Psoas muscle (tissue), 8 donors: ENCODE measurements at regions of chr6 and their contacts with region 1.

Region 1: GRCh38 chr6:3281631-3282475 is 23.1 kb downstream of the PSMG4 start:
- DNase-seq: peak in 1 of 2 donors; percentile 41
- ATAC-seq: peak; percentile 78 to 94 (median 88)
- H3K4me3 ChIP-seq: no peak overlapping the region
- H3K27ac ChIP-seq: peak overlapping the region; percentile 74
- H3K4me1 ChIP-seq: peaks cover 42% of the 10 kb centered on the region
- H3K27me3 ChIP-seq: no peaks in the 10 kb centered on the region
- CTCF ChIP-seq: no peak

Region 2: DNA sequence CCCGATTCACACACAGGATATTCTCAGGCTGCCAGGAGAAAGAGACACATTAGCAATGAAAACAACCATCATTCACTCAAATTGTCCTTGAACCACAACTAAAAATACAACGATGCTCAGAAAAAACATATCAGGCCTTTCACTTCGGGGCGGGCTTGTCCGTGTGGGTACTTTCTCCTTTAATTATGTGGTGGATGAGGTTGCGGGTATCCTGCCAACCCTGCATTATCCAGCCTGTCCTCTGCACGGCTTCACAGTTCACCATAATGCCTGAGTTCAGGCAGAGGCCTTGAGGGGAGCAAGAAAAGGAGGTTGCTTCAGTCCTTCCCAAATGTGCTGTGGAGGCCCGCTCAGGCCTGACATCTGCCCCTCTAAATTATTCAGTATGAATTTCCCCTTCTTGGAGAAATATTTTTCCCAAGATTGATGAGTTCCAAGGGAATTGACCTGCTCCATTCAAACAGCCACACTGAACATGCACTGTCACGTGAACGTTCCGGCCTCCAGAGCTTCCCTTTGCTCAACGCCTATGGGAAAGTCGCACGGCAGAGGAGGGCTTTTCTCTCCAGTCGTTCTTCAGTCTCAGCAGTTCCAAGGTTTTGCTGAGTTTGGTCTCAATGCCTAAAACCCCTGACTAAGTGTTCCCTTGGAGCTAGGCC is 601.5 kb before region 1 on chr6:
- intact Hi-C with region 1: no loop called
- DNase-seq: no peak
- ATAC-seq: peak in 1 of 4 donors; percentile 28
- H3K4me3 ChIP-seq: no peak overlapping the region
- H3K27ac ChIP-seq: no peak overlapping the region
- H3K4me1 ChIP-seq: peaks cover 4% of the 10 kb centered on the region
- H3K27me3 ChIP-seq: no peaks in the 10 kb centered on the region
- CTCF ChIP-seq: no peak

Region 3: DNA sequence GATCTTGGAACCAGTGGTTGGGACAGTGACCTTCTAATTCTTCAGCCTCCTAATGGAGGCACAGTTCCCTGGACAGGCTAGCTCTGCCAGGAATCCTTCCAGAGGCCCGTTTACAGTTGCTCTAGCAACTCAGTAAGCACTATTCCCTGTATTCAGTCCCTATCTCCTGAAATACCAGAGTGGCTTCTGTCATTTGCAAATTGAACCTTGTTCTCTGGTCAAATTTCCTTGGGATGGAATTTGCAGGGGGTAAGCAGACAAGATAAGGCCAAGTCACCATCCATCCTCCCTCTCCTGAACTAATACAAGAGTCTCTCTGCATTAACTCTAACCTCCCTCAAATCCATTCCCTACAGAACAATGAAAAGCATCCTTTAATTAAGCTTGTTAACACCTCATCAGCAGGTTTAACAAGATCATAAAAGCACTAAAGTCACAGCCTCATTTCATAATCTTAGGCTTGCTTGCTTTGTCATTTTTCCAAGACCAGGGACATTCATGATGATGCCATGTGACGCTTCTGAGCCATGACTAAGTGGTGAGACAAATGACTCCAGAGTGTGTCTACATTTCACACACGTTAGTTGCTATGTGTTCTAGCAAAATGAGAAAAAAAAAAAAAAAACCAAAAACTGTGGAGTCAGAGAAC is 137.9 kb after region 1 on chr6:
- intact Hi-C with region 1: loop called in 1 of 2 experiments (anchors 10 kb)
- DNase-seq: no peak
- ATAC-seq: peak; percentile 74 to 92 (median 88)
- H3K4me3 ChIP-seq: no peak overlapping the region
- H3K27ac ChIP-seq: peak overlapping the region; percentile 68
- H3K4me1 ChIP-seq: peaks cover 46% of the 10 kb centered on the region
- H3K27me3 ChIP-seq: no peaks in the 10 kb centered on the region
- CTCF ChIP-seq: no peak

Region 4: GRCh38 chr6:3518356-3519225 is 236.7 kb after region 1 on chr6:
- intact Hi-C with region 1: loop called in 1 of 2 experiments (anchors 10 kb)
- DNase-seq: peak; percentile 56 to 64
- ATAC-seq: peak; percentile 76 to 88 (median 78)
- H3K4me3 ChIP-seq: no peak overlapping the region
- H3K27ac ChIP-seq: no peak overlapping the region
- H3K4me1 ChIP-seq: no peaks in the 10 kb centered on the region
- H3K27me3 ChIP-seq: peaks cover 0 to 2% (median 0%) of the 10 kb centered on the region in 3 donors
- CTCF ChIP-seq: no peak

Region 5: GRCh38 chr6:3732345-3733141 is 450.7 kb after region 1 on chr6:
- intact Hi-C with region 1: loop called (anchors 1 to 2 kb)
- DNase-seq: peak; percentile 77 to 87
- ATAC-seq: peak; percentile 85 to 94 (median 90)
- H3K4me3 ChIP-seq: no peak overlapping the region
- H3K27ac ChIP-seq: no peak overlapping the region
- H3K4me1 ChIP-seq: no peaks in the 10 kb centered on the region
- H3K27me3 ChIP-seq: no peaks in the 10 kb centered on the region
- CTCF ChIP-seq: peak; percentile 88